Activated CD8-positive, alpha-beta memory T cell treated with anti-CD3 and anti-CD28 coated beads, Interleukin-2, amount 10 ng/mL, durations not matched to agents 7 days and 5 days (primary cell): ENCODE measurements at regions of chr5 and their contacts with region 1.

Region 1: GRCh38 chr5:159316519-159317383 is 13.5 kb downstream of the IL12B start:
- DNase-seq: peak; percentile 60
- ATAC-seq: peak; percentile 70
- H3K4me3 Mint-ChIP-seq: no peak overlapping the region
- H3K27ac Mint-ChIP-seq: no peak overlapping the region
- H3K4me1 Mint-ChIP-seq: no peaks in the 10 kb centered on the region
- H3K27me3 Mint-ChIP-seq: peaks cover 30% of the 10 kb centered on the region

Region 2: GRCh38 chr5:159286420-159287035 is 30.2 kb before region 1 on chr5:
- CTCF ChIA-PET with region 1: interaction called, 12 read pairs
- DNase-seq: no peak
- ATAC-seq: no peak
- H3K4me3 Mint-ChIP-seq: no peak overlapping the region
- H3K27ac Mint-ChIP-seq: no peak overlapping the region
- H3K4me1 Mint-ChIP-seq: no peaks in the 10 kb centered on the region
- H3K27me3 Mint-ChIP-seq: no peaks in the 10 kb centered on the region